ENCODE measurements at regions of chr3 and their contacts with region 1.

Region 1: DNA sequence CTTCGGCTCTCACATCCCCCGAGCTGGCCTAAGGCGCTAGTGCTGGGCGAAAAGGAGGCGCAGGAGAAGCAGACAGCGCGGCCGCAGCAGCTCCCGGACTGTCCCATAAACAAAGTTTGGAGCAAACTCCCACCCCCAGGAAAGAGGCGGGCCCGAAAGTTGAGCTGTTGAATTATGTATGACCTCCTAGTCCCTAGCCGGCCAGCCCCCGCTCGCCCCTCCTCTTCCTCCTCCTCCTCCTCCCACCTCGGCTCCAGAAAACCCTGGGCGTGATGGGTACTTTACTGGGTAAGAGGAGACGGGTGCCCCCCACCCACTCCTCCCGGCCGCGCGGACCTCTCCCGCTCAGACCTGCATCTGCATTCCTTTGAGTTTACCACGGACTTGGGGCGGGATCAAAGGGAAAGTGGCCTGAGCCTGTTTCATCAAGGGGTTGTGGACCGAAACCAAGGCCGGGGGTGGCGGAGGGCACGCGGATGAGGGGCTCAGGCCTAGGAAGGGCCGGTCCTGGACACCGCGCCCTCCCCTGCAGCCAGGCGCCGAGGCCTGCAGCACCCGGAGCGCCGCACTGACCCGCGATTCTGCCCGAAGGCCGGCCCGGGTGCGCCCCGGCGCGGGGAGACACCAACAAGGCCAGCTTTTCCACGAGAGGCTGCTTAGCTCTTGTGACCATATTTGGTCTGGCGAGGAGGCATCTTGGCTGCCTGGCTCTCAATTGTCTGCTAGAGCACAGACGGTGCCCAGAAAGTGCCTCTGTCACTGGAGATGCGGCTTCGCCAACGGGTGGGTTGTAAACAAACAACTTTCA is at the start of gene WWTR1:
- DNase-seq: peak; percentile 82
- ATAC-seq: peak; percentile 88
- H3K4me3 ChIP-seq: peak within 1 kb of the TSS; percentile 68 to 72
- H3K27ac ChIP-seq: peak within 1 kb of the TSS; percentile 89
- H3K4me1 ChIP-seq: peaks cover 23 to 67% of the 10 kb centered on the region in 2 experiments
- H3K27me3 ChIP-seq: no peaks in the 10 kb centered on the region
- CTCF ChIP-seq: peak in 1 of 3 experiments; percentile 11; a peak in 1 of 6 replicates
- POLR2A ChIP-seq: peak; percentile 92
- RAD21 ChIP-seq: peak; percentile 52
- total RNA-seq, gene WWTR1: 46.9 TPM

Region 2: GRCh38 chr3:149384911-149385321 is 273.2 kb before region 1 on chr3:
- CTCF ChIA-PET with region 1: no interaction called
- POLR2A ChIA-PET with region 1: no interaction called
- RAD21 ChIA-PET with region 1: no interaction called
- intact Hi-C with region 1: no loop called
- DNase-seq: no peak
- ATAC-seq: no peak
- H3K4me3 ChIP-seq: no peak overlapping the region
- H3K27ac ChIP-seq: no peak overlapping the region
- H3K4me1 ChIP-seq: peaks cover 20 to 49% of the 10 kb centered on the region in 2 experiments
- H3K27me3 ChIP-seq: peaks cover 3% of the 10 kb centered on the region; the same call in 1 of the 2 replicates
- CTCF ChIP-seq: no peak
- POLR2A ChIP-seq: no peak
- RAD21 ChIP-seq: no peak

Region 3: DNA sequence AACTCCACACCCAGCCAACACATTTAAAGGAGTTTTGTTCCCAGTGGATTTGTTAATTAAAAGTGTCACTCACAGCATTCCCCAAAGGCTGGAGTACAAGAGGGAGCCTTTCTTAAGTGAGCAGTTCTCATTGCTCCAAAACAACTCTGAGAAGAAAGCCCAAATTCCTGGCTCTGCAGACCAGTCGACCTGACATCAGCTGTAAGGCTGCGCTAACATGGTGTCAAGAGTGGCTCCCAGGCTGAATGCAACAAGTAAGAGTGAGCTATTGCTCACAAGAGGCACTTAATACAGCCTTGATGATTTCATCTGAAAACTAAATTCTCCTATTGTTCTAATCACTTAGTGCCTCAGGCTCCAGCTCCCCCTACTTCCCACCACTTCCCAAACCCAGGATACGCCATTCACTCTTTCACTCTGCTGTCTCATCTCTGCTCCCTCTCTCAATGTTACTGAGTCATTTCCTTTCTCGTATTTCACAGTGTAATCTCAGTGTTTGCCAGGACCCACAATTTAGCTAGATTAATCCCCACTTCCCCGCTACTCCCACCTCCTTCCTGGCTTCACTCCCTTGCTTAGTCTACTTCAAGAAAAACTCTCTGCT is 82.1 kb before region 1 on chr3:
- CTCF ChIA-PET with region 1: no interaction called
- POLR2A ChIA-PET with region 1: interaction called, 15 read pairs
- RAD21 ChIA-PET with region 1: interaction called, 3 to 4 read pairs
- intact Hi-C with region 1: loop called (anchors 5 kb)
- DNase-seq: peak; percentile 86
- ATAC-seq: peak; percentile 62
- H3K4me3 ChIP-seq: peak overlapping the region; percentile 20 to 38
- H3K27ac ChIP-seq: peak overlapping the region; percentile 99
- H3K4me1 ChIP-seq: peaks cover 99 to 100% of the 10 kb centered on the region in 2 experiments
- H3K27me3 ChIP-seq: no peaks in the 10 kb centered on the region
- CTCF ChIP-seq: no peak
- POLR2A ChIP-seq: no peak
- RAD21 ChIP-seq: no peak

Region 4: GRCh38 chr3:149581681-149582370 is 76.3 kb before region 1 on chr3:
- CTCF ChIA-PET with region 1: no interaction called
- POLR2A ChIA-PET with region 1: interaction called, 4 read pairs
- RAD21 ChIA-PET with region 1: interaction called in 1 of 2 experiments, 4 read pairs
- intact Hi-C with region 1: loop called (anchors 5 kb)
- DNase-seq: peak; percentile 96
- ATAC-seq: peak; percentile 76
- H3K4me3 ChIP-seq: peak overlapping the region; percentile 15 to 47
- H3K27ac ChIP-seq: peak overlapping the region; percentile 99
- H3K4me1 ChIP-seq: peaks cover 97 to 100% of the 10 kb centered on the region in 2 experiments
- H3K27me3 ChIP-seq: no peaks in the 10 kb centered on the region
- CTCF ChIP-seq: no peak
- POLR2A ChIP-seq: no peak
- RAD21 ChIP-seq: no peak

Region 5: DNA sequence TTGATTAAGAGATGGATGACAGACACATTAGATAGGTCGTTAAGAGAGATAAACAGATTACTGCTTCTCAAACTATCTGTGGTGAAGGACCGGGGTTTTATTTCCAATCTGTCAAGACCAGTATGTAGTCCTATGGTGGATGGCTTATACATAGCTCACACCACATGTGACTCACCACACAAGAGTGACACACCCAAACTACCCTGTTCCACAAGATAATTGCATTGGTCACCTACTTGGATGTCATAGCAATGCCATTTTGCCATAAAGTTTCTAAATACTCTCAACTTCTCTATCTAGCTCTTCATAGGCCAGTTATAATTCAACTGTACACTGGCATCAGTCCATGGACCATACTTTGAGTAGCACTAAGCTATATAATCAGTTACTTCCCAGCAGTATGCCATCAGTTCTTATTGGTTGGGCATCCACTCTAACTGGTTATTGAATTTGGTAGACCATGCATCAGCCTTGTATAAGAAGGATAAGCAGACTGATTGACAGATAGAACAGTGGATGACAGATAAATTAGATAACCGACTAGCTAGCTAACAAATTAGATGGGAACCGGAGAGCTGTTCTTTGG is 11.9 kb before region 1 on chr3:
- CTCF ChIA-PET with region 1: interaction called, 6 read pairs
- POLR2A ChIA-PET with region 1: interaction called, 10 read pairs
- RAD21 ChIA-PET with region 1: no interaction called
- intact Hi-C with region 1: no loop called
- DNase-seq: peak; percentile 47
- ATAC-seq: peak; percentile 90
- H3K4me3 ChIP-seq: no peak overlapping the region
- H3K27ac ChIP-seq: no peak overlapping the region
- H3K4me1 ChIP-seq: peaks cover 6 to 32% of the 10 kb centered on the region in 2 experiments
- H3K27me3 ChIP-seq: no peaks in the 10 kb centered on the region
- CTCF ChIP-seq: no peak
- POLR2A ChIP-seq: no peak
- RAD21 ChIP-seq: no peak

Region 6: DNA sequence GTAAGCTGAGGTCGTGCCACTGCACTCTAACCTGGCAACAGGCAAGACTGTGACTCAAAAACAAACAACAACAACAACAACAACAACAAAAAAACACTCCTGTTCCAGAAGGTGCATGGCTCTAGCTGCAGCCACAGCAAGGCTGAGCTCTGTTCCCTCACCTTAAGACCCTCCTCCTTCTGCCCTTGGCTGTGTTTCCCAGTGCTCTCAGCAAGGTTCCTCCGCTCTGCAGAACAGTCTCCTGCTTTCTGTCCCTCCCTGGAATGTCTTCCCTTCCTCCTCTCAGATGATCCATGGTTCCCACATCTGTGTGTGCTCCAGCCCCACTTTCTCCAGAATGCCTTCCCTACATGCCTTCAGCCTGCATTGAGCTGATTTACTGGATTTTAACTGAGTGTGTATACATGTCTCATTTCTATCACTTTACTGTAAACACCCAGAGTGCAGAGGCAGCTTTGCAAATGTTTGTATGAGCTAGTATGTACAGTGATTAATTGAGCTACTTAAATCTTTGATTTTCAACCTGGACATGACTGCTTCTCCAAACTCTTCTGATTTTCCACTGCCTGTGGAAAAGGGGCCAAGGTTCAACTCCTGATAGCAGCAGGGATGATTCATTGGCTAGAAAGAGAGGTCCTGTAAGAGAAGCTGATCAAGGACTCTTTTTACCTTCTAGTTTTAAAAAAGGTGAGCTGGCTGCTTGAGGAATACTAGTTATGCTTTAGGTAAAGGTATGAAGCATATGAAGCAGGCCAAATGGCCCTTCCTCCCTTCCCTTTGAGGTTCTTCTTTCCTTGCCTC is 119.5 kb after region 1 on chr3:
- CTCF ChIA-PET with region 1: no interaction called
- POLR2A ChIA-PET with region 1: no interaction called
- RAD21 ChIA-PET with region 1: no interaction called
- intact Hi-C with region 1: no loop called
- DNase-seq: no peak
- ATAC-seq: no peak
- H3K4me3 ChIP-seq: no peak overlapping the region
- H3K27ac ChIP-seq: no peak overlapping the region
- H3K4me1 ChIP-seq: no peaks in the 10 kb centered on the region; a peak in 1 of 4 replicates
- H3K27me3 ChIP-seq: no peaks in the 10 kb centered on the region
- CTCF ChIP-seq: no peak
- POLR2A ChIP-seq: no peak
- RAD21 ChIP-seq: no peak

Region 7: GRCh38 chr3:149832086-149832485 is 174.0 kb after region 1 on chr3:
- CTCF ChIA-PET with region 1: no interaction called
- POLR2A ChIA-PET with region 1: no interaction called
- RAD21 ChIA-PET with region 1: no interaction called
- intact Hi-C with region 1: no loop called
- DNase-seq: no peak
- ATAC-seq: no peak
- H3K4me3 ChIP-seq: no peak overlapping the region
- H3K27ac ChIP-seq: no peak overlapping the region
- H3K4me1 ChIP-seq: no peaks in the 10 kb centered on the region
- H3K27me3 ChIP-seq: no peaks in the 10 kb centered on the region
- CTCF ChIP-seq: no peak
- POLR2A ChIP-seq: no peak
- RAD21 ChIP-seq: no peak

Measured in HCT116 (cell line).